MCF 10A (cell line): ENCODE measurements at regions of chr9 and their contacts with region 1.

Region 1: GRCh38 chr9:111957856-111958652 is 61.4 kb downstream of the UGCG start:
- DNase-seq: peak; percentile 89
- H3K4me3 Mint-ChIP-seq: peak overlapping the region; percentile 68
- H3K27ac Mint-ChIP-seq: peak overlapping the region; percentile 85
- H3K4me1 Mint-ChIP-seq: peaks cover 36% of the 10 kb centered on the region
- H3K27me3 Mint-ChIP-seq: no peaks in the 10 kb centered on the region
- CTCF ChIP-seq: no peak

Region 2: GRCh38 chr9:111851566-111851965 is 106.5 kb before region 1 on chr9:
- CTCF ChIA-PET with region 1: interaction called, 3 read pairs
- POLR2A ChIA-PET with region 1: interaction called, 3 read pairs
- intact Hi-C with region 1: loop called (anchors 5 kb)
- DNase-seq: peak; percentile 96
- H3K4me3 Mint-ChIP-seq: no peak overlapping the region
- H3K27ac Mint-ChIP-seq: peak overlapping the region; percentile 60
- H3K4me1 Mint-ChIP-seq: peaks cover 23% of the 10 kb centered on the region
- H3K27me3 Mint-ChIP-seq: no peaks in the 10 kb centered on the region
- CTCF ChIP-seq: no peak

Region 3: DNA sequence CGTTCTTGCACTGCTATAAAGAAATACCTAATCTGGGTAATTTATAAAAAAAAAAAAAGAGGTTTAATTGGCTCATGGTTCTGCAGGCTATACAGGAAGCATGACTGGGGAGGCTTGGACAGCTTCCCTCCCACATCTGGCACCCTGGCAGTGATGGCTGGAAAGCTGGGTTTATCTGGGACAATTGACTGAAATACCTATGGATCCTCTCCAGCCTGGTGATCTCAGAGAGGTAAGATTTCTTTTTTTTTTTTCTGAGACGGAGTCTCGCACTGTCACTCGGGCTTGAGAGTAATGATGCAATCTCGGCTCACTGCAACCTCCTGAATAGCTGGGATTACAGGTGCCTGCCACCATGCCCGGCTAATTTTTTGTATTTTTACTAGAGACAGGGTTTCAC is 84.2 kb before region 1 on chr9:
- CTCF ChIA-PET with region 1: no interaction called
- POLR2A ChIA-PET with region 1: no interaction called
- intact Hi-C with region 1: no loop called
- DNase-seq: no peak
- H3K4me3 Mint-ChIP-seq: no peak overlapping the region
- H3K27ac Mint-ChIP-seq: no peak overlapping the region
- H3K4me1 Mint-ChIP-seq: peaks cover 13% of the 10 kb centered on the region
- H3K27me3 Mint-ChIP-seq: no peaks in the 10 kb centered on the region
- CTCF ChIP-seq: no peak

Region 4: GRCh38 chr9:112028280-112029221 is 70.5 kb after region 1 on chr9:
- CTCF ChIA-PET with region 1: no interaction called
- POLR2A ChIA-PET with region 1: interaction called, 11 read pairs
- intact Hi-C with region 1: no loop called
- DNase-seq: no peak
- H3K4me3 Mint-ChIP-seq: no peak overlapping the region
- H3K27ac Mint-ChIP-seq: peak overlapping the region; percentile 96
- H3K4me1 Mint-ChIP-seq: peaks cover 30% of the 10 kb centered on the region
- H3K27me3 Mint-ChIP-seq: no peaks in the 10 kb centered on the region
- CTCF ChIP-seq: no peak

Region 5: GRCh38 chr9:112041536-112042243 is 83.6 kb after region 1 on chr9:
- CTCF ChIA-PET with region 1: interaction called, 3 read pairs
- POLR2A ChIA-PET with region 1: interaction called, 5 read pairs
- intact Hi-C with region 1: loop called (anchors 2 kb)
- DNase-seq: peak; percentile 95
- H3K4me3 Mint-ChIP-seq: peak overlapping the region; percentile 24
- H3K27ac Mint-ChIP-seq: peak overlapping the region; percentile 85
- H3K4me1 Mint-ChIP-seq: peaks cover 40% of the 10 kb centered on the region
- H3K27me3 Mint-ChIP-seq: no peaks in the 10 kb centered on the region
- CTCF ChIP-seq: no peak

Region 6: DNA sequence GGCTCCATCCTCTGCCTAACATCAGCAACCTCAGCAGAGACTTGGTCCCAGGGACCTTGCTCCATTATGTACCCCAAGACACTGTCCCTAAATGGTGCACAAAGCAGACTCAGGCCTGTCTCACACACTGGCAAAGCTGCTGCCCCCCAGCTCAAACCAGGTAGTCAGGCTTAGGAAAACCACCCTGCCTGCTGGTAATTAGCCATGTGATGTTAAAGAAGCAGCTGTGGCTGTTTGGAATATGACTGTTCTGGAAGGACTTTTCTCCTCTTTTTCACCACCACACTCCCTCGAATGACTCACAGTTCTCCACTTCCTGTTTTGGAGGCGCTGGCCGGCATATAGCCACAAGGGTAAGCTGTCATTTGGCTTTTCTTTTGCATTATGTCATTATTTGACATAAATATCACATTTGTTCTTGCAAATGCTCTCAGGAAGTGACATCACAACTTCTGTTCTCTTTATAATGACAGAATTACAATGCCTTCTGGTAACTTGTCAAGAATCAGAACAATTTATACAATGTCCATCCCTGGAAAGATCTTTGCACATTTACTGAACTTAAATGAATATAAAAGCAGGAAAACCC is 103.2 kb after region 1 on chr9:
- CTCF ChIA-PET with region 1: no interaction called
- POLR2A ChIA-PET with region 1: interaction called, 10 read pairs
- intact Hi-C with region 1: no loop called
- DNase-seq: peak; percentile 92
- H3K4me3 Mint-ChIP-seq: no peak overlapping the region
- H3K27ac Mint-ChIP-seq: peak overlapping the region; percentile 53
- H3K4me1 Mint-ChIP-seq: peaks cover 43% of the 10 kb centered on the region
- H3K27me3 Mint-ChIP-seq: no peaks in the 10 kb centered on the region
- CTCF ChIP-seq: no peak